Mammary epithelial cell (primary cell): ENCODE measurements at regions of chr9 and their contacts with region 1.

Region 1: DNA sequence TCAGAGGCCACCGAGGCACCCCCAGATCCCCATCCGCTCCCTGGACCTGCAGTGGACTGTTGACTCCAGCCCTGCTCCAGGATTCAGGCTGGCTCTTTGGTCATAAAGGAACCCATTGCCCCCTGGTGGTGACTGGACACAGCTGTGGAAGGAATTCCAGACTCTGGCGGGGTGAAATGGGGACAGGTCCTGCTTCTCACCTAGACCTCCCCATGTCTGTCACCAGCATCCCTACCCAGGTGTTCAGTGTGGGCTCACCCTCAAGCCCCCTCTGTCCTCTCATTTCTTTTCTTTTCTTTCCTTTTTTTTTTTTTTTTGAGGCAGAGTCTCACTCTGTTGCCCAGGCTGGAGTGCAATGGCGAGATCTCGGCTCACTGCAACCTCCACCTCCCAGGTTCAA is 25.5 kb upstream of the STXBP1 start:
- DNase-seq: peak; percentile 56
- H3K4me3 ChIP-seq: no peak overlapping the region
- H3K27ac ChIP-seq: no peak overlapping the region
- H3K4me1 ChIP-seq: peaks cover 15% of the 10 kb centered on the region
- H3K27me3 ChIP-seq: no peaks in the 10 kb centered on the region
- CTCF ChIP-seq: peak; percentile 89 to 96

Region 2: GRCh38 chr9:127277099-127277498 is 309.4 kb before region 1 on chr9:
- CTCF ChIA-PET with region 1: no interaction called
- dilution Hi-C with region 1: no loop called
- in situ Hi-C with region 1: no loop called
- intact Hi-C with region 1: loop called (anchors 10 kb)
- DNase-seq: no peak
- H3K4me3 ChIP-seq: no peak overlapping the region
- H3K27ac ChIP-seq: no peak overlapping the region
- H3K4me1 ChIP-seq: peaks cover 9% of the 10 kb centered on the region
- H3K27me3 ChIP-seq: no peaks in the 10 kb centered on the region
- CTCF ChIP-seq: no peak

Region 3: GRCh38 chr9:127463911-127464310 is 122.6 kb before region 1 on chr9:
- CTCF ChIA-PET with region 1: no interaction called
- dilution Hi-C with region 1: no loop called
- in situ Hi-C with region 1: no loop called
- intact Hi-C with region 1: no loop called
- DNase-seq: no peak
- H3K4me3 ChIP-seq: no peak overlapping the region
- H3K27ac ChIP-seq: no peak overlapping the region
- H3K4me1 ChIP-seq: no peaks in the 10 kb centered on the region
- H3K27me3 ChIP-seq: no peaks in the 10 kb centered on the region
- CTCF ChIP-seq: no peak

Region 4: DNA sequence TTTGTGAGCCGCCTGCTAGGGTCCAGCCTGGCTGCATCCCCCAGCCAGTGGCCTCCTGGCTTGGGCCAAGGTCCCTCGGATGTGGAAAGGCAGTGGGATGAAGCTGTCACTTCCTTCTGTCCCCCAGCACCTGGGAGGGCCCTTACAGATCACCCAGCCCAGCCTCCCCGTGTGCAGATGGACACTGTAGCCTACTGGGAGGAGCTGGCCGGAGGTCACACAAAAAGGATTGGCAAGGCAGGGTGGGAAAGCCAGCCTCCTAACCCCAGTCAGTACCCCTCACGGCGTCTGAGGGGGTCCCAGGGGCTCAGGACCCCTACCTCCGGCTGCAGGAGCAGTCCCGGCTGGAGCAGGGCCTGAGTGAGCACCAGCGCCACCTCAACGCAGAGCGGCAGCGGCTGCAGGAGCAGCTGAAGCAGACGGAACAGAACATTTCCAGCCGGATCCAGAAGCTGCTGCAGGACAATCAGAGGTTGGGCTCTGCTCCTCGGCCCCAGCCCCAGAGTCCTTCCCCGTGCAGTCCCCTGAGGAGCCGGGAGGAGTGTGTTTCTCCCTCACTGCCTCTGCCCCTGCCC is 106.9 kb before region 1 on chr9:
- CTCF ChIA-PET with region 1: no interaction called
- dilution Hi-C with region 1: loop called (anchors 5 kb)
- in situ Hi-C with region 1: no loop called
- intact Hi-C with region 1: no loop called
- DNase-seq: no peak
- H3K4me3 ChIP-seq: no peak overlapping the region
- H3K27ac ChIP-seq: no peak overlapping the region
- H3K4me1 ChIP-seq: no peaks in the 10 kb centered on the region
- H3K27me3 ChIP-seq: no peaks in the 10 kb centered on the region
- CTCF ChIP-seq: no peak

Region 5: DNA sequence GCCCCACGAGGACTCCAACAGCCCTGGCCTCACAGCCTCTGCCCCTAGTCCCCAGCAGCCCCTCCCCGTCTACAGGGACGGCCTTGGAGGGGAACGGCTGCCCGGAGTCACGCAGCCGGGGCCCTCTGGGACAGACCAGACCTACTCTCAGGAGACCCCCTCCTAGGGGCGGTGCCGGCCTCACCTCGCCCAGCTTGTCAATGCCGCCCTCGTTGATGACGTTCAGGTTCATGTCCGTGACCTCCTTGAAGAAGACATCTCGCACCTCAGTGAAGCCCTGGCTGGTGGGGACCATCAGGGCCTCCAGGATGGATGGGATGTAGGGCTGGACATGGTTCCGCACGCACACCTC is 76.6 kb before region 1 on chr9:
- CTCF ChIA-PET with region 1: interaction called, 3 read pairs
- dilution Hi-C with region 1: loop called (anchors 5 kb)
- in situ Hi-C with region 1: no loop called
- intact Hi-C with region 1: no loop called
- DNase-seq: no peak
- H3K4me3 ChIP-seq: no peak overlapping the region
- H3K27ac ChIP-seq: no peak overlapping the region
- H3K4me1 ChIP-seq: peaks cover 9% of the 10 kb centered on the region
- H3K27me3 ChIP-seq: no peaks in the 10 kb centered on the region
- CTCF ChIP-seq: no peak

Region 6: GRCh38 chr9:127561619-127562500 is 24.7 kb before region 1 on chr9:
- CTCF ChIA-PET with region 1: interaction called, 28 read pairs
- dilution Hi-C with region 1: no loop called
- in situ Hi-C with region 1: no loop called
- intact Hi-C with region 1: loop called (anchors 1 kb)
- DNase-seq: peak; percentile 99
- H3K4me3 ChIP-seq: no peak overlapping the region
- H3K27ac ChIP-seq: peak overlapping the region; percentile 76
- H3K4me1 ChIP-seq: peaks cover 87% of the 10 kb centered on the region
- H3K27me3 ChIP-seq: no peaks in the 10 kb centered on the region
- CTCF ChIP-seq: no peak

Region 7: GRCh38 chr9:127637322-127637847 is 50.8 kb after region 1 on chr9:
- CTCF ChIA-PET with region 1: no interaction called
- dilution Hi-C with region 1: no loop called
- in situ Hi-C with region 1: no loop called
- intact Hi-C with region 1: no loop called
- DNase-seq: peak; percentile 90
- H3K4me3 ChIP-seq: peak overlapping the region in 1 of 3 experiments; percentile 10
- H3K27ac ChIP-seq: peak overlapping the region; percentile 57
- H3K4me1 ChIP-seq: peaks cover 24% of the 10 kb centered on the region
- H3K27me3 ChIP-seq: no peaks in the 10 kb centered on the region
- CTCF ChIP-seq: no peak

Region 8: GRCh38 chr9:127734747-127735529 is 148.4 kb after region 1 on chr9 and contains the start of gene TOR2A:
- CTCF ChIA-PET with region 1: interaction called, 16 read pairs
- dilution Hi-C with region 1: no loop called
- in situ Hi-C with region 1: loop called (anchors 5 kb)
- intact Hi-C with region 1: loop called (anchors 1 kb)
- DNase-seq: peak; percentile 95
- H3K4me3 ChIP-seq: peak within 1 kb of the TSS; percentile 59 to 62 (median 61)
- H3K27ac ChIP-seq: peak within 1 kb of the TSS; percentile 51
- H3K4me1 ChIP-seq: peaks cover 20% of the 10 kb centered on the region
- H3K27me3 ChIP-seq: no peaks in the 10 kb centered on the region
- CTCF ChIP-seq: peak; percentile 84 to 94
- total RNA-seq, gene TOR2A: 4.0 to 13.2 TPM

Region 9: DNA sequence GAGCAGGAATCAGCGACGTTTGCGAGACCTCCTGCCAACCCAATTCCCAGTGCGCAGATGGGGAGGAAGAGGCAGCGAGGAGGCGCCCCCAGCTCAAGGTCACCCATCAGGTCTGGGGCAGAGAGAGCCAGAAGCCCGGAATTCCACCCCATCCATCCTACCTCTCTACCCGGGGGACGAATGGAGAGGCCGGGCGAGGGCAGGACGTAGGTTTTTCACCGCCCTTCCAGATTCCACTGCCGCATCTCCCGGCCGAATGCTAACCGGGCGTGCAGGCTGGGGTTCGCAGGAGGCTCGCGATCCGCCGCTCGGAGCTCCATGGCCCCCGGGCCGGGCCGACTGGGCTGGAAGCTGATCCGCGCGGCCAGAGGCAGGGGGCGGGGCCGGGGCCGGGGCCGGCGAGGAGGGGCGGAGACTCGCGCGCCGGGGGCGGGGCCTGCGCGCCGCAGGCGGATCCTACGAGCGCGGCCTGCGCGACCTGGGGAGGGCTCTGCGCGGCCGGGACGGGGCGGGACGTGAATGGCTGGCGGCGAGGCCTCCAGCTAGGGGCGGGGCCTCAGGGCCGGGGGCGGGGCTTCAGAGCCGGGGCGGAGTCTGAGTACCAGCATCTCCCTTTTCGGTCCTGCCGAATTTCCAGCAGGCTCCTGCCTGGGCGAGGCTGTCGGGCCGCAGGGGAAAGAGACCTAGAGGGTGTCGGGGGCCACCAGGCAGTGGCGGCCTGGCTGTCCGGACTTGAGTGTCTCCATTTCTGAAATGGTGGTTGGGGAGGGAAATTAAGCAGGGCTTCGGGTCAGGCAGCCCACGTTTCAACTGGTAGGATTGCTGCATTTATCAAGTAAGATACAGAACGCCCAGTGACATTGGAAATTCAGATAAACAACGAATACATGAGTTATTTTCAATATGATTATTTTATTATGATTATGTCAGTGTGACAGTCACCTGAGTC is 330.4 kb after region 1 on chr9 and contains the start of gene ST6GALNAC4:
- CTCF ChIA-PET with region 1: no interaction called
- dilution Hi-C with region 1: no loop called
- in situ Hi-C with region 1: loop called in 1 of 2 experiments (anchors 10 kb)
- intact Hi-C with region 1: loop called (anchors 1 kb)
- DNase-seq: peak; percentile 76
- H3K4me3 ChIP-seq: peak within 1 kb of the TSS; percentile 35 to 62 (median 58)
- H3K27ac ChIP-seq: peak within 1 kb of the TSS; percentile 16
- H3K4me1 ChIP-seq: peaks cover 38% of the 10 kb centered on the region
- H3K27me3 ChIP-seq: no peaks in the 10 kb centered on the region
- CTCF ChIP-seq: no peak
- total RNA-seq, gene ST6GALNAC4: 14.3 to 19.6 TPM